Activated T-helper 2 cell treated with anti-CD3 and anti-CD28 coated beads, Interferon-gamma antibody, Interleukin-2, Interleukin-4, amounts not matched to agents 10 μg/mL and 5 μg/mL and 100 μg/mL, durations not matched to agents 14 hours and 24 hours and 36 hours (primary cell): ENCODE measurements at regions of chr3 and their contacts with region 1.

Region 1: GRCh38 chr3:113495035-113495434 is 19.9 kb downstream of the SPICE1 start:
- DNase-seq: no peak
- H3K4me3 Mint-ChIP-seq: no peak overlapping the region
- H3K27ac Mint-ChIP-seq: no peak overlapping the region
- H3K4me1 Mint-ChIP-seq: no peaks in the 10 kb centered on the region
- H3K27me3 Mint-ChIP-seq: no peaks in the 10 kb centered on the region

Region 2: DNA sequence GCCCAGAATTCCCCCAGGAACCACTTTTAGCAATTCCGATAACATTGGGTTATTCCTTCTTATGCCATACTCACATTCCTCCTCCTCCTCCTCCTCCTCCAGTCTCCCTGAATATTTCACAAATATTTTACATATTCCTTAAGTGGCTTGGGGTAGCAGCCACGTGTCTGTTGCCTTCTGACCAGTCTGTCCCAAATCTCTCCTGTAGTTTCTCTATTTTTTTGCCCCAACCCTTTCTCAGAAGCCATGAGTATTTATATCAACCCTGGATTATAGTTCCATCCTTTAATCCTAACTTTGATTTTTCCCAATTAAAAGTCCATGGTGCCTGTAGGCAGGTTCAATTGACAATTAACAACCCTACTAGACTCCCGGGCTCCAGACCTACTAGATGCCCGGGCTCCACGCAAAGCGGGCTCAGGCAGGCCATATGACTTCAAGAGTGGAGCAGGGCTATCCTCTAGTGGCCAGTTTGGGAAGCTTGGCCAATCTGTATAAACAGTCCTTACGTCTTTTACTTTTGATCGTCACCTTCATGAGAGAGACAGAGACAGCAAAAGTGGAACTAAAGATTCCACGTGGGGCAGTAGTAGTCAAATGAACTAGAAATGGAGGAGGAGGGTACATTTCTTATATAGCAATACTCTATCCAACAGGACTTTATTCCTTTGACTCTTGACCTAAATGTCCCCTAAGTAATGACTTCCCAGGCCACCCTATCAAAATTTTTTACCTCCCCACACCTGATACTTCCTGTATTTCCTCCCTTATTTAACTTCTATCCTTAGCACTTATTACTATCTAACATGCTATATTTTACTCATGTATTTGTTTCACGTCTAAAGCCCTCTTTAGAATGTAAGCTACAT is 131.7 kb after region 1 on chr3:
- intact Hi-C with region 1: loop called (anchors 1 kb)
- DNase-seq: no peak
- H3K4me3 Mint-ChIP-seq: no peak overlapping the region
- H3K27ac Mint-ChIP-seq: no peak overlapping the region
- H3K4me1 Mint-ChIP-seq: peaks cover 11% of the 10 kb centered on the region
- H3K27me3 Mint-ChIP-seq: no peaks in the 10 kb centered on the region